ENCODE measurements at regions of chr5 and their contacts with region 1.

Region 1: GRCh38 chr5:134370871-134371833 is at the start of gene UBE2B:
- DNase-seq: peak; percentile 99
- ATAC-seq: peak; percentile 71
- H3K4me3 ChIP-seq: peak within 1 kb of the TSS; percentile 90 to 99 (median 98)
- H3K27ac ChIP-seq: peak within 1 kb of the TSS; percentile 99
- H3K4me1 ChIP-seq: peaks cover 45% of the 10 kb centered on the region
- H3K27me3 ChIP-seq: no peaks in the 10 kb centered on the region; a peak in 1 of 5 replicates
- CTCF ChIP-seq: no peak
- EP300 ChIP-seq: peak in 1 of 2 experiments; percentile 61; a peak in 2 of 4 replicates
- POLR2A ChIP-seq: peak; percentile 62 to 75
- RAD21 ChIP-seq: no peak
- total RNA-seq, gene UBE2B: 25.2 and 56.7 TPM in 2 replicates

Region 2: GRCh38 chr5:134304311-134304710 is 66.8 kb before region 1 on chr5:
- CTCF ChIA-PET with region 1: no interaction called
- POLR2A ChIA-PET with region 1: no interaction called
- in situ Hi-C with region 1: no loop called
- intact Hi-C with region 1: loop called (anchors 2 kb)
- DNase-seq: no peak
- ATAC-seq: no peak
- H3K4me3 ChIP-seq: no peak overlapping the region
- H3K27ac ChIP-seq: no peak overlapping the region
- H3K4me1 ChIP-seq: peaks cover 16% of the 10 kb centered on the region
- H3K27me3 ChIP-seq: no peaks in the 10 kb centered on the region
- CTCF ChIP-seq: no peak
- EP300 ChIP-seq: no peak
- POLR2A ChIP-seq: no peak
- RAD21 ChIP-seq: no peak

Region 3: DNA sequence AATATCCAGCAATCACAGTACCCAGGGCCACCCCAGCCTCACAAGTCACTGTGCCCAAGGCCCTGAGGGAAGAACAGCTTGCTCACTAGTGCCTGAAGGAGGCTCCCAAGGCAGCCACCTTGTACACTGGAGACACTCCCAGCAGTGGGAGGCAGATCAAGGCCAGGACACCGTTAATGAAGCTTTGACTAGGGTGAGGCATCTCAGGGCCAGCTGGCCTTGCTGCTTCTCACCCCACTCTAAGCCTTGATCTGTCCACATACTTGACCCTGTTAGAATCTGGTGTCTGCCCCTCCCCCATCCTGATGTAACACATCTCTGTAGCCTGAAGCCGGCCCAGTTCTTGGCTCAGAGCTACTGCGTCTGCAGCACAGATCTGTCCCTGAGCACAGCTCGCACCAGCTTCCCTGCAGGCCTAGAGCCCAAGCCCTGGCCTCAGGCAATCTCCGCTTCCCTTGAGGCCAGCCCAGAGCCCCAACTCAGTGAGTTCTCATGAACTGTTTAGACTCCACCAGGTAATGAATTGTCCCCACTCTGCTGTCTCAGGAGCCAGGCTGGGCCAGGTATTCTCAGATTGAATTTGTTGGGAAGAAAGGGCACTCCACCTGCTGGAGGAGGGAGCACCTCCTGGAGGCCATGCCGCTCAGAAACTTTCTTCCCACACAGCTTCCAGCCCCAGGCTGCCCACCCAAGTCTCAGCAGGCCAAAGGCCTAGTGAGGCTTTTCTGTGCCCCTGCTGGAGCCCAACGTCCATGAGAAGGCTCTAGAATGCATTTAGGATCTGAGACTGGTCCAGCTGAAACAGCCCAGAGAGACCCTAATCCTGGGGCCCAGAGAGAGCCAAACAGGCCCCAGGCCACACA is 140.9 kb after region 1 on chr5:
- CTCF ChIA-PET with region 1: no interaction called
- POLR2A ChIA-PET with region 1: interaction called, 10 read pairs
- in situ Hi-C with region 1: no loop called
- intact Hi-C with region 1: no loop called
- DNase-seq: peak; percentile 74
- ATAC-seq: peak; percentile 84
- H3K4me3 ChIP-seq: peak overlapping the region; percentile 12 to 60 (median 24); a peak in 5 of 6 replicates
- H3K27ac ChIP-seq: peak overlapping the region; percentile 71
- H3K4me1 ChIP-seq: peaks cover 73% of the 10 kb centered on the region
- H3K27me3 ChIP-seq: no peaks in the 10 kb centered on the region
- CTCF ChIP-seq: peak; percentile 77
- EP300 ChIP-seq: peak in 1 of 2 experiments; percentile 40; a peak in 1 of 4 replicates
- POLR2A ChIP-seq: peak in 1 of 2 experiments; percentile 61; a peak in 1 of 4 replicates
- RAD21 ChIP-seq: peak; percentile 57; the same call in 1 of the 2 replicates

Region 4: GRCh38 chr5:134656690-134657089 is 285.5 kb after region 1 on chr5:
- CTCF ChIA-PET with region 1: no interaction called
- POLR2A ChIA-PET with region 1: no interaction called
- in situ Hi-C with region 1: no loop called
- intact Hi-C with region 1: no loop called
- DNase-seq: peak; percentile 64
- ATAC-seq: peak; percentile 45
- H3K4me3 ChIP-seq: no peak overlapping the region
- H3K27ac ChIP-seq: peak overlapping the region; percentile 38
- H3K4me1 ChIP-seq: peaks cover 59% of the 10 kb centered on the region
- H3K27me3 ChIP-seq: no peaks in the 10 kb centered on the region
- CTCF ChIP-seq: no peak
- EP300 ChIP-seq: peak in 1 of 2 experiments; percentile 55; a peak in 1 of 4 replicates
- POLR2A ChIP-seq: no peak
- RAD21 ChIP-seq: no peak